Endothelial cell of umbilical vein (primary cell): ENCODE measurements at regions of chr3 and their contacts with region 1.

Region 1: DNA sequence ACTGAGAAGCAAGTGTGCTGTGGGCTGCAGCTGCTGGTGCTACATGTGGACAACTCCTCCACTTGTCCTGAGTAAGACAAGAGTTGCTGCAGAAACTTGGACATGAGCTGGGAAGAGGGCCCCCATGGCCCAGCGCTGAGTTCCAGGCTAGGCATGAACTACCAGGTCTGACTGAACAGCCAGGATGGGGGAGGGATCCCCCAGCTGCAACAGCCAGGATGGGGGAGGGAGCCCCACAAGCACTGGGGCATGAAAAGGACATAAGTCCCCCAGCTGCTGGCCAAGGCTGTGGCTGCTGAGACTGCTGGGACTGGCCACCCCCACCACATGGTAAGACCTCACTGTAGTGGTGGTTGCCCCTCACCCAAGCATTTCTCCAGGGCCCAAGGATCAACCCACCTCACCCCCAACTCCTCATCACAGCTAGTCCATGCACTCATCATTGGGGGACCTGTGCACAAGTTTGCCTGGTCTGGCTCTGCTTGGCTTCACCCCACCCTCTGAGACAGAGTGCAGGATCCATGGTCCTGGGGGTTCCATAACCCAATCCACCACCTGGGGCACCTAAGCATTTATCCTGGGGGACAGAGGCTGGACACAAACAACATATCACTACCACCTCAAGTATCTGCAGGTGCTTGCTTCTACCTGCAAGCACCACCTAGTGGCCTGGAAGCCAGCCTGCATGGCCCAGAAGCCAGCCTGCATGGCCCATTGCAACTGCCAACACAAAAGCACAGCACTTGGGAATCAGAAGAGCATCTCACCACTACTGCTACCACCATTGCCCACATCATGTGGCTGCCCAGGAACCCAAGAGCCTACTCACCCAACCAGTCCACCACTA is 84.5 kb upstream of the STT3B start:
- DNase-seq: peak; percentile 26
- H3K4me3 ChIP-seq: no peak overlapping the region
- H3K27ac ChIP-seq: no peak overlapping the region
- H3K4me1 ChIP-seq: no peaks in the 10 kb centered on the region
- H3K27me3 ChIP-seq: no peaks in the 10 kb centered on the region
- CTCF ChIP-seq: peak; percentile 53 to 74
- POLR2A ChIP-seq: no peak

Region 2: DNA sequence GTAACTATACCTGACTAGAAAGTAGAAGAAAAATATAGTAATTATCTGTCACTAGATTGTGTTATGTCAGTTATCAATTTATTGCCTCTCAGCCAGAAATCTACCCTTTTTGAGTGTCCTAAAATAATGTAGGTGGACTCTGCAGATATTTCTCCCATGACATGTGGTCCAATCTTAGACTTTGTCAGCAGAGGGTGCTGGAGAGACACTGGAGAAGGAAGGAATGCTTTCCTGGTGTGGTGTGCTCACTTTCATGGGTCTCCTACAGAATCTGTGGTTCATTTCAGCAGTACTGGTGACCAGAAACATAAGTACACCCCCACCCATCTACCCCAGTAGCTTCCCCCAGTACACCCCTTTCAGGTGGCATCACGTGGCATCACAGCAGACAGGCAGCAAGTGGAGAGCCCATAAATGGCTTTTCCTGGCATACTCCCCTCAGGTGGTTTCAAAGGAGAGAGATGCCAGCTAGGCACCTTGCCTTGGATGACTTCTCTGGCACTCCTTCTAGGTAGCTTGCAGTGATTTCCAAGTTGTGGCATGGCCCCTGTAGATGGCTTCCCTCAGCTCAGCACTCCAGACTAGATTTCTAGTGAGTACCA is 668.5 kb before region 1 on chr3:
- CTCF ChIA-PET with region 1: no interaction called
- POLR2A ChIA-PET with region 1: no interaction called
- dilution Hi-C with region 1: no loop called
- intact Hi-C with region 1: loop called (anchors 1 kb)
- DNase-seq: peak; percentile 26
- H3K4me3 ChIP-seq: no peak overlapping the region
- H3K27ac ChIP-seq: no peak overlapping the region
- H3K4me1 ChIP-seq: peaks cover 7% of the 10 kb centered on the region
- H3K27me3 ChIP-seq: peaks cover 8 to 32% of the 10 kb centered on the region in 2 experiments
- CTCF ChIP-seq: peak; percentile 25 to 32
- POLR2A ChIP-seq: no peak

Region 3: DNA sequence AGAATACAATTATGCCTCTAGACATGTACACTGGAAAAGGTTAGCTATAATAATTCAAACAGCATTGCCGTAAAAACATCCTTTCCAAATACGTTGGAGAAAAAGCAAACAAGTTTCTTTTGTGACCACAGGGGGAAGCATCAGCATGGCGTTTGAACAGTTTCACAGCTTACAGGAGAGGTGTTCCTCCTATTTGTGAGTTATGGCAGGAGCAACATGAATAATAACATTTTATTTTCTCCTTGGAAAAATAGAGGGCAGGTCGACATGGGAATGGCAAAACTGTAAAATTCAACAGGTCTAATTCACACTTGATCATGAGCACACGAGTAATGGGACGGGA is 514.1 kb before region 1 on chr3:
- CTCF ChIA-PET with region 1: interaction called, 7 read pairs
- POLR2A ChIA-PET with region 1: no interaction called
- dilution Hi-C with region 1: no loop called
- intact Hi-C with region 1: loop called (anchors 10 kb)
- DNase-seq: peak; percentile 48
- H3K4me3 ChIP-seq: no peak overlapping the region
- H3K27ac ChIP-seq: no peak overlapping the region
- H3K4me1 ChIP-seq: no peaks in the 10 kb centered on the region
- H3K27me3 ChIP-seq: peaks cover 0 to 1% of the 10 kb centered on the region in 2 experiments
- CTCF ChIP-seq: peak in 1 of 2 donors; percentile 31
- POLR2A ChIP-seq: no peak

Region 4: GRCh38 chr3:31384117-31384516 is 64.1 kb before region 1 on chr3:
- CTCF ChIA-PET with region 1: no interaction called
- POLR2A ChIA-PET with region 1: no interaction called
- dilution Hi-C with region 1: no loop called
- intact Hi-C with region 1: no loop called
- DNase-seq: peak; percentile 54
- H3K4me3 ChIP-seq: no peak overlapping the region
- H3K27ac ChIP-seq: no peak overlapping the region
- H3K4me1 ChIP-seq: peaks cover 4% of the 10 kb centered on the region
- H3K27me3 ChIP-seq: no peaks in the 10 kb centered on the region
- CTCF ChIP-seq: no peak
- POLR2A ChIP-seq: no peak